ENCODE measurements at regions of chr14 and their contacts with region 1.

Region 1: GRCh38 chr14:49633640-49634546 is 1.2 kb downstream of the DNAAF2 start:
- DNase-seq: peak; percentile 56
- H3K4me3 ChIP-seq: peak overlapping the region; percentile 81
- CTCF ChIP-seq: peak; percentile 93

Region 2: DNA sequence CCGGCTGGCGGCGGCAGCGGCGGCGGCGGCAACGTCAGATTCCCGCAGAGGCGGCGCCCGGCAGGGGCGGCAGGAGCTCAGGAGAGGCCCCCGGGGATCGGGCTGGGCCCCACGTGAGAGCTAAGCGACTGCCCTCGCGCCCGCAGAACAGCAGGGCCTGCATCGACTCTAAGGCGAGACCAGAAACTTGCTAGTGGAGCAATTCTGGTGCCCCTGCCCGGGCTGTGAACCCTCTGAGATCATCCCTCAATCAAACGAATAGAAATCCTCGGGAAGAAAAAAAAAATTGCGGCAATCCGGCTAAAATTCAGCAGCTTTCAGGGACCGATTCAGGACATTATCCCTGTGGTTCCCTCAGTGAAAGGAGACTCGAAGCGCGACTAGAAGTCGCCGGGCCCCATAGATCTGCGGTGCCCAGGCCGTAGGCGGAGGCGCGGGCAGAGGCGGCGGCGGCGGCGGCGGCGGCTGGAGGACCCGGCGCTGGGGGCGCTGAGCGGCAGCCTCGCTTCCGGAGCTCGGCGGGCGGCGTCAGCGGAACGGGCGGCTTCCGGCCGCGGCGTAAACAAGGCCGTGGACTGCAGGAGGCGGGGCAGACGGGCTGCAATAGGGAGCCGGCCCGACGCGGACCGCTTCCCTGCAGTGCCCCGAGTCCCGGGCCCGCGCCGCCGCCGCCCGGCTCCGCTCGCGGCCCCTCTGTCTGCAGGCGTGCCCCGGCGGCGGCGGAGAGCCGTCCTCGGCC is 133.8 kb after region 1 on chr14 and contains the start of gene KLHDC2:
- CTCF ChIA-PET with region 1: interaction called, 27 read pairs
- POLR2A ChIA-PET with region 1: interaction called, 15 read pairs
- DNase-seq: no peak
- H3K4me3 ChIP-seq: peak within 1 kb of the TSS; percentile 96
- CTCF ChIP-seq: peak; percentile 36

Region 3: DNA sequence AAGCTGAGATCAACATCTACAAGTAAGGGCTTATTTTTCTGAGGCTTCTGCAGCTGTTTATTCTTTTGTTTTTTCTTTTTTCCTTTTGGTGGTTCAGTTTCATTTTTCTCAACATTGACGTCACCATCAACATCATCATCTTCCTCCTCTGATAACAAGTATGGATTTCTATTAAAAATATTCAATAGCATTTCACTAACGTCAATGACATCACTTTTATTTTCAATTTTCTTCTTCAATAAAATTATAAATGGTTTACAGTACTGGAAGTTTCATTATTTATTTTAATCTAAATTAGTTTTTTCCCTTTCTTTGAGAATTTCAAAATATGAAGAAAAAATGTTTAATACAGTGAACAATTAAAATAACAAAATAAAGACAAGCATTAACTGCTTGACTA is 194.7 kb after region 1 on chr14:
- CTCF ChIA-PET with region 1: interaction called, 16 read pairs
- POLR2A ChIA-PET with region 1: no interaction called
- DNase-seq: no peak
- H3K4me3 ChIP-seq: no peak overlapping the region
- CTCF ChIP-seq: no peak

Measured in AG04449 (cell line).